Activated CD4-positive, alpha-beta T cell treated with anti-CD3 and anti-CD28 coated beads for 36 hours (primary cell): ENCODE measurements at regions of chr19 and their contacts with region 1.

Region 1: GRCh38 chr19:55624109-55625003 is at the start of gene ZNF784:
- DNase-seq: peak; percentile 97
- ATAC-seq: peak; percentile 70
- H3K4me3 Mint-ChIP-seq: peak within 1 kb of the TSS; percentile 79
- H3K27ac Mint-ChIP-seq: peak within 1 kb of the TSS; percentile 85
- H3K4me1 Mint-ChIP-seq: peaks cover 53% of the 10 kb centered on the region
- H3K27me3 Mint-ChIP-seq: no peaks in the 10 kb centered on the region
- total RNA-seq, gene ZNF784: 3.2 to 4.3 TPM

Region 2: GRCh38 chr19:55166530-55167268 is 457.7 kb before region 1 on chr19 and contains the start of gene DNAAF3:
- CTCF ChIA-PET with region 1: no interaction called
- POLR2A ChIA-PET with region 1: no interaction called
- intact Hi-C with region 1: loop called in 1 of 2 experiments (anchors 1 kb)
- DNase-seq: peak; percentile 95
- ATAC-seq: peak; percentile 95
- H3K4me3 Mint-ChIP-seq: peak within 1 kb of the TSS; percentile 71
- H3K27ac Mint-ChIP-seq: peak within 1 kb of the TSS; percentile 11
- H3K4me1 Mint-ChIP-seq: peaks cover 10% of the 10 kb centered on the region
- H3K27me3 Mint-ChIP-seq: peaks cover 45% of the 10 kb centered on the region
- total RNA-seq, gene DNAAF3: 0.53 to 0.72 TPM

Region 3: GRCh38 chr19:55503502-55504251 is 120.7 kb before region 1 on chr19:
- CTCF ChIA-PET with region 1: interaction called, 6 read pairs
- POLR2A ChIA-PET with region 1: no interaction called
- intact Hi-C with region 1: loop called in 1 of 2 experiments (anchors 1 kb)
- DNase-seq: peak; percentile 96
- ATAC-seq: peak; percentile 97
- H3K4me3 Mint-ChIP-seq: peak overlapping the region; percentile 65
- H3K27ac Mint-ChIP-seq: peak overlapping the region; percentile 67
- H3K4me1 Mint-ChIP-seq: peaks cover 19% of the 10 kb centered on the region
- H3K27me3 Mint-ChIP-seq: no peaks in the 10 kb centered on the region

Region 4: DNA sequence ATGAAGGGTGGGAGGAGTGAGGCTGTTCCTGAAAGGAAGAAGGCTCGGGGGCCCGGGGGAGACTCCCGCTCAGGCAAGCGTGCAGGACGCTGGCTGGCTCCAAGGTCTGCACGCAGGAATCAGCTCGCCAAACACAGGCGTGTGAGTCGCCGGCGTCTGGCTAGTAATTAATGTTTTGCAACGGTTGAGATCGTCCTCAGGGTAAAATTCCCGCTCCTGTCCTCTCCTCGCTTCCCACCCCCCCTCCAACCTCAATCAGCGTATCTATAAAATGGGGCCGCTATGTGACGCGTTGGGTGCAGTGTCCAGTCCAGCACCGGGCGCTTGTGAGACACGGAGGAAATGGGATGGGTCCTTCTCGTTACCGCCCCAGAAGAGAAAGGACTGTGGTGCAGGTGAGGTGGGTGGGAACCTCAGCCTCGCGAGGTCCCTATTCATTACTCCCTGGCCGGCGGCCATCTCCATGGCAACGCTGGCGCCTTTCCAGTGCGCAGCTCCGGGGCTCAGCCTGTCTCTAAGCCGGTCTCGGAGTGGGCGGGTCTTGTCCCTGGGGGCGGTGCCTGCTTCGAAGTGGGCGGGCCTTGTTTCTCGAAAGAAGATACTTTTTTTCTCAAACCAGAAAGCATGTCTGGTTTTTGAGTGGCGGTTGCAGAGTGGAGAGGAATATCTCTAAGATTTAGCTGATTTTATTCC is 37.2 kb before region 1 on chr19:
- CTCF ChIA-PET with region 1: interaction called, 4 read pairs
- POLR2A ChIA-PET with region 1: interaction called, 5 read pairs
- intact Hi-C with region 1: loop called in 1 of 2 experiments (anchors 1 kb)
- DNase-seq: peak; percentile 97
- ATAC-seq: peak; percentile 99
- H3K4me3 Mint-ChIP-seq: peak overlapping the region; percentile 71
- H3K27ac Mint-ChIP-seq: peak overlapping the region; percentile 37
- H3K4me1 Mint-ChIP-seq: peaks cover 20% of the 10 kb centered on the region
- H3K27me3 Mint-ChIP-seq: no peaks in the 10 kb centered on the region

Region 5: DNA sequence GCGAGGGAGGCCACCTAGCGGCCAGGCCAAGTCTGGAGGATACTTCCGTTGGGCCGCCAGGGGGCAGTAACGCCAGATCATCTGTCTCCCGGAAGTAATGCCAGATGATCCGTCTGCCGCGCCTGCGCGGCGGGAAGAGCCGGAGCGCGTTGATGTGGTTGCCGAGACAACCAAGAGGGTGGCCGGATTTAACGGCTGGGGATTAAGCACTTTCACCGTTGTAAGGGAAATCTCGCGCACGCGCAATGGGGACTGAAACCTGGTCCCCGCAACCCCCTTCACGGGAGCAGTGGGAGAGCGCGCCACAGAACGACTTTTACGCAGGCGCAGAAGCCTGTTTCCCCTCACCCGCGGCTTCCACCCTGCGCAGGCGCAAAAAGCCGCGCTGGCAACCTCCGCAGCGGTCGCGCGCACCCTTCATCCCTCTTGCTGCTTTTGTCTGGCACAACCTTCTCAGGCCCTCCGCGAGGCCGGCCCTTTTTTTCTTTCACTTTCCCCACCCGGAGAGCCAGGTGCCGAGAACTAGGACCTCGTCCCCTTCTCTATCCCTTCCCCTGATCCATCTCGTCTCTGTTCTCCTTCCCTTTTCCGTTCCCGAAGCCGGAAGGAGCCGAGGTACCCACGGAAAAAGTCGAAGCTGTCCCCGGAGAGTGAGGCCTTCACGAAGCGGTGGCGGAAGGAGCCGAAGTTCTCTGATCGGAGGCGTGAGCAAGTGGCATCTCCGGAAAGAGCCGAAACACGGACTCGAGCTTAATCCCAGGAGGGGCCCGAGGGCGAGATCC is 29.6 kb after region 1 on chr19:
- CTCF ChIA-PET with region 1: interaction called, 7 read pairs
- POLR2A ChIA-PET with region 1: interaction called, 4 read pairs
- intact Hi-C with region 1: loop called in 1 of 2 experiments (anchors 1 kb)
- DNase-seq: peak; percentile 99
- ATAC-seq: peak; percentile 84
- H3K4me3 Mint-ChIP-seq: peak overlapping the region; percentile 86
- H3K27ac Mint-ChIP-seq: peak overlapping the region; percentile 98
- H3K4me1 Mint-ChIP-seq: peaks cover 37% of the 10 kb centered on the region
- H3K27me3 Mint-ChIP-seq: no peaks in the 10 kb centered on the region